Sigmoid colon (tissue), 7 donors: ENCODE measurements at regions of chr4 and their contacts with region 1.

Region 1: DNA sequence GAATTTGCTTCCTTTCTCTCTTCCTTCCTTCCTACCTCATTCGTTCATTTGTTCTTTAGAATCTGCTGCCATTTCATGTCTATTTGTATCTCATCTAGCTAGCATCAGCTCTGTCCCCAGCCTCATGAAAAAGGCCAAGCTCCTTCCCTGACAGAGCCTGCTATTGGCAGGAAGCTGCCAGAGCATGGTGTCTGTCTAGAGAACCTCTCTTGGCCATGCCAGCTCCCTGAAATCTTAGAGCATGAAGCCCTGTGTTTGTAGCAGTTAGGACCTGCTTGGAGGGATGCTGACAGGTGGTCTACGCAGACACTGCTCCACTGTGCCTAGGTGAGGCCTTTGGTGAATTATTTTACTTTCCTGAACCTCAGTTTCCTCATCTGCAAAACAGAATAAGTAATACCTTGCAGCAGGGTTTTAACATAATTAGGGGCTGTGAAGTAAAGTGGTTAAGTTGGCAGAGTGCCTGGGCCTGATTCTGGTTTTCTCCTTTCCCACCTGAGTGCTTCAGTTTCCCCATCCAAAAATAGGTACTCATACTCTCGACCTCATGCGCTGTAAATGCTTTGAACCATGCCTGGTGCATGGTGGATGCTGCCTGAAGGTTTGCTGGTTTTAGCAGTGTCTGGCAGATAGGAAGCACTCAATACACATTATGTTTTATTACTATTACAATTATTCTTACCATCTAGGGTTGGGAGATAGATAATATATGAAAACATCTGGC is 4.7 kb downstream of the PTTG2 start:
- DNase-seq: no peak
- H3K4me3 ChIP-seq: no peak overlapping the region
- H3K27ac ChIP-seq: peak overlapping the region in 1 of 4 donors; percentile 77
- H3K4me1 ChIP-seq: peaks cover 0 to 54% (median 46%) of the 10 kb centered on the region in 4 donors
- H3K27me3 ChIP-seq: no peaks in the 10 kb centered on the region
- CTCF ChIP-seq: no peak
- EP300 ChIP-seq: no peak
- POLR2A ChIP-seq: no peak

Region 2: DNA sequence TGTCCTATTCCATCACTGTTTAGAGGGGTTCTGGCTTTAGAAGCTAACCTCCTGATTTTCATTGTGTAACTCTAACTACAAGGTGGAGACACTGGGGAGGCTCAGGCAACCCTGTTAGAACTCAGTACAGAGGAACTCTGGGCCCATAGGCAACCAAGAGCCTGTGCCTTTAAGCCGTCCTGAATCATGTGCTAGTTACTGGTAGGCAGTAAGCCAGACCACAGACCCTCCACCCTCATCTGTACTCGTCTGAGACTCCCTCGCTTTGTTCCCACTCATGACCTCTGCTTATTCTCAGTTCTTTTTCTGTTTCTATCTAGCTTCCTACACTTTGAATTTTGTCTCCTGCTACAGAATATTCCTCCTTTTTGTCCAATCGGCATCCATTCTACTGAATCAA is 42.6 kb before region 1 on chr4:
- intact Hi-C with region 1: loop called (anchors 5 kb)
- DNase-seq: no peak
- H3K4me3 ChIP-seq: no peak overlapping the region
- H3K27ac ChIP-seq: peak overlapping the region in 2 of 4 donors; percentile 5 to 11
- H3K4me1 ChIP-seq: peaks cover 0 to 42% (median 17%) of the 10 kb centered on the region in 4 donors
- H3K27me3 ChIP-seq: no peaks in the 10 kb centered on the region
- CTCF ChIP-seq: no peak
- EP300 ChIP-seq: no peak
- POLR2A ChIP-seq: no peak

Region 3: GRCh38 chr4:37946503-37947179 is 18.3 kb before region 1 on chr4:
- intact Hi-C with region 1: no loop called
- DNase-seq: no peak
- H3K4me3 ChIP-seq: no peak overlapping the region
- H3K27ac ChIP-seq: no peak overlapping the region
- H3K4me1 ChIP-seq: peaks cover 0 to 39% (median 29%) of the 10 kb centered on the region in 4 donors
- H3K27me3 ChIP-seq: no peaks in the 10 kb centered on the region
- CTCF ChIP-seq: no peak
- EP300 ChIP-seq: no peak
- POLR2A ChIP-seq: no peak